HCT116 (cell line): ENCODE measurements at regions of chr4 and their contacts with region 1.

Region 1: GRCh38 chr4:130183096-130183495 is 1087.1 kb downstream of the C4orf33 start:
- DNase-seq: no peak
- ATAC-seq: no peak
- H3K4me3 ChIP-seq: no peak overlapping the region
- H3K27ac ChIP-seq: no peak overlapping the region
- H3K4me1 ChIP-seq: no peaks in the 10 kb centered on the region
- H3K27me3 ChIP-seq: no peaks in the 10 kb centered on the region
- CTCF ChIP-seq: no peak
- POLR2A ChIP-seq: no peak
- RAD21 ChIP-seq: no peak

Region 2: DNA sequence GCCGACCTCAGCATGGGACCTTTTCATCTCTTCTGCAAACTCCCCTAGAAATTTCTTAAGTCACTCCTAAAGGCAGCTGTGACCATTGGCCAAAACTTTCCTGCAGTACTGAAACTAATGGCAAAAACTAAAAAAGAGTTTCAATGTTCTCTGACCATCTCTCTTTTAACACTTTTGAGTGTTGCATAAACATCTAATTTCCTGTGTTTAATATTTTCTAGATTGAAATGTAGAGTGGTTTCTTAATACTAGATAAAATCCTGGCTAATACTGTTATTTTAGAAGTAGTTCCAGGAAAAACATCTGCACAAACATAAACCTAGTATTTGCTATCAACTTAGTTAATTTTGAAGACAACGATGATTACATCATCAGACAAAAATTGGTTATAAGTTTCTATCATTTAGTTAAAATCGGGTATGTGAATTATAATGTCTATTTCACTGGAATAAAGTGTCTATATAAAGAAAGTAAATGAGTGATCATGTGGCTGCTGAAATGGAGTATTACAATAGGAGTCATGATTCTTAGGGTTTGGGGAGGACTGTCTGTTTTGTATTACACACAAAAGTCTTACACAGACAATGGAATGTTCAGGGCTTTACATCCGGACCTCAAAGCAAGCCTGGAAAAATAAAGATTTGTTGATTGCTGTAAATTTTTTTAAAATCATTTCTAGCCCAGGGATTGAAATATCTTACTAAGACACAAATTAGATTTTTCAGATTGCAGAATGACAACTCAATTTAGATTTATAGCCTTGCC is 236.3 kb after region 1 on chr4:
- CTCF ChIA-PET with region 1: no interaction called
- POLR2A ChIA-PET with region 1: no interaction called
- RAD21 ChIA-PET with region 1: no interaction called
- intact Hi-C with region 1: loop called (anchors 10 kb)
- DNase-seq: no peak
- ATAC-seq: no peak
- H3K4me3 ChIP-seq: no peak overlapping the region
- H3K27ac ChIP-seq: no peak overlapping the region
- H3K4me1 ChIP-seq: no peaks in the 10 kb centered on the region
- H3K27me3 ChIP-seq: no peaks in the 10 kb centered on the region
- CTCF ChIP-seq: no peak
- POLR2A ChIP-seq: no peak
- RAD21 ChIP-seq: no peak